IMR-90 (cell line): ENCODE measurements at regions of chr11 and their contacts with region 1.

Region 1: DNA sequence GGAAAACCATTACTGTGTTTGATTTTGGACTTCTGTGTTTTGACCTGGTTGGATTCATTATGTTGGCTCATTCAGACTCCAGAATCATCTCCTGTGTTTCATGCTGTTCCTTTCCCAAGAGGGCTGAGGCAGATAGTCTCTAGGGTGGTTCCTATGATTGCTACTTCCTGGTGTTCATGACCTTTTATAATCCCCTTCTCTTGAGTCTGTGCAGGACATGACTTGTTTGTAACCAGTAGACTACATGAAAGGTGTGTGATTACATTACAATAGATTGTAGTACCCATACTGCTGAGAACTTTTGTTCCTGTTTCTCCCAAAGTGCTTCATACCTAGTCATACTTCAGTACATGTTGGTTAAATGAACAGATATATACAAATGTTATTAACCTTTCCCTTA is 700.6 kb downstream of the METTL15 start:
- DNase-seq: no peak
- ATAC-seq: no peak
- H3K4me3 ChIP-seq: no peak overlapping the region
- H3K27ac ChIP-seq: no peak overlapping the region
- H3K4me1 ChIP-seq: peaks cover 2% of the 10 kb centered on the region; the same call in 1 of the 2 replicates
- H3K27me3 ChIP-seq: no peaks in the 10 kb centered on the region
- CTCF ChIP-seq: no peak
- POLR2A ChIP-seq: no peak
- RAD21 ChIP-seq: no peak

Region 2: GRCh38 chr11:28767574-28767973 is 41.2 kb before region 1 on chr11:
- CTCF ChIA-PET with region 1: no interaction called
- POLR2A ChIA-PET with region 1: no interaction called
- dilution Hi-C with region 1: no loop called
- in situ Hi-C with region 1: no loop called
- intact Hi-C with region 1: loop called (anchors 5 kb)
- DNase-seq: peak; percentile 59
- ATAC-seq: no peak
- H3K4me3 ChIP-seq: no peak overlapping the region
- H3K27ac ChIP-seq: no peak overlapping the region
- H3K4me1 ChIP-seq: peaks cover 4% of the 10 kb centered on the region; the same call in 1 of the 2 replicates
- H3K27me3 ChIP-seq: no peaks in the 10 kb centered on the region
- CTCF ChIP-seq: no peak
- POLR2A ChIP-seq: no peak
- RAD21 ChIP-seq: no peak

Region 3: DNA sequence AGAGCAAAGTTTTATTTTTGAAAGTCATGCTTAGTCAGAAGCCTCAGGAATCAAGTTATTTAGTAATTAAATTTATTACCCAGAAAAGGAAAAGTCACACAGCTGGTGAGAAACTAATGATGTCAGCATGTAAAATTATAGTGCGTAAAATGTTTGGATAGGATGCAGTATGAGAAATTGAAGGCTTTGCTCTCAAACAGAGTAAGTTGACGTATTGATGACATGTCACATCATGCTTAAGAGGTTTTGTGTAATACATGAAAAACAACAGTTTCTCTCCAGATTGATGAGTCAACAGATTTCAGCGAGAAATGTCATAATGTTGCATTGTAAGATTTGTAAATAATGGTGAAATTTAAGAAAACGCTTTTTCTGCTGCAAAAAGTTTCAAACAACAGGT is 69.3 kb after region 1 on chr11:
- CTCF ChIA-PET with region 1: no interaction called
- POLR2A ChIA-PET with region 1: no interaction called
- dilution Hi-C with region 1: no loop called
- in situ Hi-C with region 1: no loop called
- intact Hi-C with region 1: no loop called
- DNase-seq: peak; percentile 14
- ATAC-seq: no peak
- H3K4me3 ChIP-seq: no peak overlapping the region
- H3K27ac ChIP-seq: no peak overlapping the region
- H3K4me1 ChIP-seq: no peaks in the 10 kb centered on the region
- H3K27me3 ChIP-seq: no peaks in the 10 kb centered on the region
- CTCF ChIP-seq: no peak
- POLR2A ChIP-seq: no peak
- RAD21 ChIP-seq: no peak